Left ventricle myocardium superior (tissue), 1 donor: ENCODE measurements at regions of chr13 and their contacts with region 1.

Region 1: GRCh38 chr13:23466144-23467002 is 32.9 kb upstream of the SACS start:
- DNase-seq: peak; percentile 83
- ATAC-seq: peak; percentile 97

Region 2: GRCh38 chr13:23570099-23570920 is 103.9 kb after region 1 on chr13 and contains the start of gene TNFRSF19:
- intact Hi-C with region 1: loop called (anchors 5 kb)
- DNase-seq: peak; percentile 61
- ATAC-seq: peak; percentile 88
- total RNA-seq, gene TNFRSF19: 41.6 TPM

Region 3: DNA sequence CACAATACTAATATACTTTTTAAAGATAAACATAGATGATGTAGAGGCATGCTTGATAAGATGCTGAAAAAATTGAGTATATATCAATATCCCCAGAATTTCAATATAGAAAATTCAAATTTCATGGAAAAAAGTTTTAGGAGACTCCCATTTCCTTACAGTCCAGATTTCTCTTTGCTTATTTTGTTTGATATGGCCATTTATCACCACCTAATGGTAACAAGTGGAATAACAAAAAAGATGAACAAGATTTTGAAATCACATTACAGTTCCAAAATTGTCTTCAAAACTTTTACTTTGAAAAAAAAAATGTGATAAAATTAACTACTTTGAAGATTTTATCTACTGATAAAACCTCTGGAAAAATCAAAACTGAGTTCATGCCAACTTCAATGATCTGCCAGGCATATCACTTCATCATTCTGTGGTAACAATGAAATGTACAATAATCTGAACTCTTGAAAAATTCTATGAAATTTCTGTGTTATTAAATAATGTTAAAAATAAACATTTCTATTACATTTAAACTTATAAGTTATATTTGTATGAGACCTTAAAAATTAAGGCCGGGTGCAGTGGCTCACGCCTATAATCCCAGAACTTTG is 405.3 kb after region 1 on chr13:
- intact Hi-C with region 1: loop called (anchors 5 kb)
- DNase-seq: no peak
- ATAC-seq: peak; percentile 41

Region 4: DNA sequence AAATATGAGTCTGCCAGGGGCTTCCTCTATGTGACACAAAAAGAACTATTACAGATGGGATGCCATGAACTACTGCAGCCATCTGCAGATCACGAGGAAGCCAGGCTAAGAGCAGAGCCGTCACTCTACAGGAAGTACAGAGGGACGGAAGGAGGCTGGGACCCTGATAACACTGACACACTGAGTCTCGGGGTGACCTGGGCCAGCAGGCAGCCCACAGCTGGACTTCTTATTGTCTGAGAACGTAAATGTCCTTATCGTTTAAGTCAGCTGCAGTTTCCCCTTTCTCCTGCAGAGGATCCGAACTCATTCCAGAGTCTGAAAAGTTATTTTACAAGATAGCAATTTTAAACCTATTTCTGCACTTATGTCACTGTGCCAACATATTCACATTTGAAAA is 1025.5 kb after region 1 on chr13:
- intact Hi-C with region 1: no loop called
- DNase-seq: no peak
- ATAC-seq: peak; percentile 31